PC-9 (cell line): ENCODE measurements at regions of chr12 and their contacts with region 1.

Region 1: GRCh38 chr12:32558903-32559302 is 120.2 kb upstream of the DNM1L start:
- DNase-seq: no peak
- H3K4me3 ChIP-seq: no peak overlapping the region
- H3K27ac ChIP-seq: no peak overlapping the region
- H3K4me1 ChIP-seq: no peaks in the 10 kb centered on the region
- H3K27me3 ChIP-seq: no peaks in the 10 kb centered on the region
- CTCF ChIP-seq: no peak

Region 2: GRCh38 chr12:32650508-32650907 is 91.6 kb after region 1 on chr12:
- CTCF ChIA-PET with region 1: no interaction called
- POLR2A ChIA-PET with region 1: no interaction called
- intact Hi-C with region 1: no loop called
- DNase-seq: peak; percentile 28 to 67
- H3K4me3 ChIP-seq: no peak overlapping the region
- H3K27ac ChIP-seq: peak overlapping the region; percentile 51
- H3K4me1 ChIP-seq: peaks cover 15% of the 10 kb centered on the region
- H3K27me3 ChIP-seq: no peaks in the 10 kb centered on the region
- CTCF ChIP-seq: no peak

Region 3: GRCh38 chr12:32737715-32738114 is 178.8 kb after region 1 on chr12:
- CTCF ChIA-PET with region 1: no interaction called
- POLR2A ChIA-PET with region 1: interaction called, 10 read pairs
- intact Hi-C with region 1: no loop called
- DNase-seq: no peak
- H3K4me3 ChIP-seq: no peak overlapping the region
- H3K27ac ChIP-seq: no peak overlapping the region
- H3K4me1 ChIP-seq: no peaks in the 10 kb centered on the region
- H3K27me3 ChIP-seq: no peaks in the 10 kb centered on the region
- CTCF ChIP-seq: no peak